ENCODE measurements at regions of chr2 and their contacts with region 1.

Region 1: DNA sequence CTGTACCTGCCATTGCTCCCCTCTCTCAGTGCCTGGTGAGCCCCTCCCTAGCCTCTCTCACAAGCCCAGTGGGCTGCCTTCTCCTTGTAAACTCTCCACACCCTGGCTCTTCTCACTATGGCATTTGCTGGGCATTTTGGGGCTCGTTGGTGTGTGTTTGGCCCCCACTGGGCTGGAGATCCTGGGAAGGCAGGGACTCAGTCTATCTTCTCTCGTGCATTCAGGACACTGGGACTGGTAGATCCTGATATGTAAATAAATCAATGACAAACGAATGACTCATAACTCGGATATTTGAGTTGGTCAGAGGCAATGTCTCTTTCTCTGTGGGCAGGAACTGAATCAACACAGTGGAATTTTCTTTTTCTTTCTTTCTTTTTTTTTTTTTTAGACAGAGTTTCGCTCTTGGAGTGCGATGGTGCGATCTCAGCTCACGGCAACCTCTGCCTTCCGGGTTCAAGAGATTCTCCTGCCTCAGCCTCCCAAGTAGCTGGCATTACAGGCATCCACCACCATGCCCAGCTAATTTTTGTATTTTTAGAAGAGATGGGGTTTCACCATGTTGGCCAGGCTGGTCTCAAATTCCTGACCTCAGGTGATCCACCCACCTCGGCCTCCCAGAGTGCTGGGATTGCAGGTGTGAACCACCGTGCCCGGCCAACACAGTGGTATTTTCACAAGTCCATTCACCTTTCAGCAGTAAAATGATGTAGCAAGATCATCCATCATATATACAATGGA is 144.6 kb upstream of the SPRED2 start:
- DNase-seq: peak; percentile 82 to 91
- ATAC-seq: peak; percentile 92 to 95
- H3K4me3 ChIP-seq: peak overlapping the region; percentile 21; the same call in 2 of the 3 replicates
- H3K27ac ChIP-seq: peak overlapping the region; percentile 79 to 88
- H3K4me1 ChIP-seq: peaks cover 28% of the 10 kb centered on the region
- CTCF ChIP-seq: no peak
- EP300 ChIP-seq: 0 out of 5 replicates have a peak, but pooled peaks of 1 of the 2 experiments have one; percentile 27
- POLR2A ChIP-seq: no peak
- RAD21 ChIP-seq: no peak

Region 2: DNA sequence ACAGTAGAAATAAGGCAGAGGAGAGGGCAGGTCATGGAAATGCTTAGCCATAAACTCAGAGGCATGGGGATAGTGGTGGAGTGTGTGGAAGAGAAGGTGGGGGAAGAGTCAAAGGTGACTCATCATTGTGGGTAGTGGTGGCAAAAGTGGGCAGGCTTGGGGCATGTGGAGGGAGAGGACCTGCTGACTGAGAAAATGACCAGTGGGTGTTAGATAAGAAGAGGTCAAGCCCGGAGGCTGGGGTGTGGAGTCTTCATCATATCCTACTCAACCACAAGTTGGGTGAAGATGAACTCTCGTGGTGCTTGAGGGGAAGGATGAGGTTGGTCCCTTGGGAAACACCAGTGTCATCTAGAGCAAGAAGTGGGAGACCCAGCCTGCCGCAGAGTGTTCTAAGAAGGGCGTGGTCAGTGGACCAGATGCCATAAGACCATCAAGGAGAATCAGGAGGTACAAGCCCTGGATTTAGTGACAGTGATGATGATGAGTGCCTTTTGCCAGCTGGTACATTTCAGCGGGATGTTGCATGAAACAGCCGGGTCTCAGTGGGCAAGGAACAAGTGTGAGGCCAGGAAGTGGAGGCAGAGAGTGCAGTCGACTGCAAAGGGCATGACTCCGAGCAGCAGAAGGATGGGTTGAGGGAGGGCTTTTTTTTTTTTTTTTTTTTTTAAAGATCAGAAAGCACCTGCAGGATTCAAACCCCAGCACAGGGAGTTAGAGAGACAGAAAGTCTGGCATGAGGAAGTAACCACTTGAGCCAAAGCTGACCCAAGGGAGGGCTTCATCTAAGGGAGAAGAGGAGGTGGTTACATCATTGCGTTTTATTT is 22.1 kb before region 1 on chr2:
- CTCF ChIA-PET with region 1: interaction called, 10 read pairs
- POLR2A ChIA-PET with region 1: no interaction called
- DNase-seq: no peak
- ATAC-seq: no peak
- H3K4me3 ChIP-seq: no peak overlapping the region
- H3K27ac ChIP-seq: no peak overlapping the region
- H3K4me1 ChIP-seq: no peaks in the 10 kb centered on the region
- CTCF ChIP-seq: no peak
- EP300 ChIP-seq: no peak
- POLR2A ChIP-seq: no peak
- RAD21 ChIP-seq: no peak

Region 3: GRCh38 chr2:65562890-65563289 is 14.1 kb before region 1 on chr2:
- CTCF ChIA-PET with region 1: interaction called, 17 read pairs
- POLR2A ChIA-PET with region 1: no interaction called
- DNase-seq: no peak
- ATAC-seq: no peak
- H3K4me3 ChIP-seq: no peak overlapping the region
- H3K27ac ChIP-seq: no peak overlapping the region
- H3K4me1 ChIP-seq: peaks cover 7% of the 10 kb centered on the region; the same call in 2 of the 3 replicates
- CTCF ChIP-seq: no peak
- EP300 ChIP-seq: no peak
- POLR2A ChIP-seq: no peak
- RAD21 ChIP-seq: no peak

Measured in A549 (cell line).